Ascending aorta (tissue), 2 donors: ENCODE measurements at regions of chr7 and their contacts with region 1.

Region 1: GRCh38 chr7:155598810-155599210 is 45.7 kb upstream of the RBM33 start:
- DNase-seq: peak in 1 of 2 donors; percentile 79
- H3K4me3 ChIP-seq: no peak overlapping the region
- H3K27ac ChIP-seq: no peak overlapping the region
- H3K4me1 ChIP-seq: no peaks in the 10 kb centered on the region
- H3K27me3 ChIP-seq: no peaks in the 10 kb centered on the region
- CTCF ChIP-seq: peak; percentile 77 to 95 (median 87)

Region 2: DNA sequence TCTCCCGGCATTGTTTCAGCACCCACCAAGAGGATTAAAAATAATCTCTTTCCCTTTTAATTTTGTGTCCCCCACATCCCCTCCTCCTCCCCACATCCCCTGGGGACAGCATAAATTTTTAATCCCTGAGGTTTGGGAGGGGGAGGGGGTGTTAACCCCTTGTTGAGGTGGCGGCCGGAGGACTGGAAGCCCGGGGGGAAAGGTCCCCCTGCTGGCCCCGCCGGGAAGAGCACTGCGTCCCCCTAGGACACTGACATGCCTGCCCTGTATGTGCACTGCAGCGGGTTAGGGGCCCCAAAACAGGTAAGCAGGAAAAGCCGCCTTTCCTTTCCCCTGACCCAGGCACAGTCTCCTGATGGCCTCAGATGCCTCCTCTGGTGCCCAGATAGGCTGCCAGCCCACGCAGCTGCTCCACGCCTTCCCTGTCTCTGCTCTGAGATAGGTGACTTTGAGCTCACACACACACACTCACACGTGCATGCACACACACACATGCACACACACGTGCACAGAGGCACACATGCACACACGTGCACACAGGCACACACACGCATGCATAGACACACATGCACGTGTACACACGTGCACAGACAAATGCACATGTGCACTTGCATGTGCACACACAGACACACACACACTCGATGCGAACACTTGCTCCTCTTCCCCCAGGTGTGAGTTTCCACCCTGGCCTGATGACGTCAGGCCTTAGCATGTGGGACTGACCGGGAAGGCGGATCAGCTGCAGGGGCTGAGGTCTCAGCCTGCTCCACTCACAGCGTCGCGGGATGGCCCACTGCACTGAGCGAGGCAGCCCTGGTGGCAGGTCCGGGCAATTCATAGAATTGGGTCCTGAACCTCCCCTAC is 64.8 kb before region 1 on chr7:
- intact Hi-C with region 1: no loop called
- DNase-seq: no peak
- H3K4me3 ChIP-seq: no peak overlapping the region
- H3K27ac ChIP-seq: no peak overlapping the region
- H3K4me1 ChIP-seq: peaks cover 0 to 3% of the 10 kb centered on the region in 2 donors
- H3K27me3 ChIP-seq: peaks cover 10% of the 10 kb centered on the region
- CTCF ChIP-seq: peak in 1 of 3 experiments; percentile 14

Region 3: DNA sequence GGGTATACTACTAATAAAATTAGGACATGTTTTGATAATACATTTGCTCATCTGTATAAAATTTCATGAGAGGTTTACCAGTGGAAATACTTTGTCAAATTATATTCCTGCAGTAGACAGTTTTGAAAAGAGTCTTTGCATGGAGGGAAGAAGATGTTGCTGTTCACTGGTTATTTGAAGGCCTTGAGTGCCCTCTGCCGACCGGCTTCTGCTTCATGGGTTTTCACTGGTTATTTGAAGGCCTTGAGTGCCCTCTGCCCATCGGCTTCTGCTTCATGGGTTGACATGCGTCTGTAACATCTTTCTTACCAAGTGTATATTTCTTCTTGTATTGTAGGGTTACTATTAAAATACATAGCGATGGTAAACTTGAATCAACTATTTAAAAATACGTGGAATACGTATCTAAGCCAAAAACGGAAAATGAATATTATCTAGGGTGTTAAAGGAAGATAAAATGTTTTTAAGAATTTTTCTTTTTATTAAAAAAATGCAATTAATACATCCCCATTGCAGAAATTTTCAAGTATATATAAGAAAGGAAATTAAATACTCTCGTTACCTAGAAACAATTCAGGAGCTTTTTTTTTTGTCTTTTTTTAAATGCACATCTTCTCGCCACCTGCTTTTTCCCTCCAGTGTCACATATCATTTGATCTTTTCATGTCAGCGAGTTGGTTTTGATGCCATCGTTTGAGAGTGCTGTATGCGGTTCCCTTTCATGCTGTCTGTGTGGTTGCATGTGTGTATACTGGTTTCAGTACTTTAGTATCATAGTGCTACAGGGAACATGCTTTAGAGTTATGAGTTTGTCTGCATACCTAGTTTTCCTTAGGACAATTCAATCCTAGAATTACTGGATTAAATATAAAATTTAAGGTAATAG is 140.1 kb after region 1 on chr7:
- intact Hi-C with region 1: loop called (anchors 2 kb)
- DNase-seq: peak in 1 of 2 donors; percentile 79
- H3K4me3 ChIP-seq: no peak overlapping the region
- H3K27ac ChIP-seq: no peak overlapping the region
- H3K4me1 ChIP-seq: no peaks in the 10 kb centered on the region
- H3K27me3 ChIP-seq: no peaks in the 10 kb centered on the region
- CTCF ChIP-seq: peak; percentile 22 to 53 (median 44)

Region 4: DNA sequence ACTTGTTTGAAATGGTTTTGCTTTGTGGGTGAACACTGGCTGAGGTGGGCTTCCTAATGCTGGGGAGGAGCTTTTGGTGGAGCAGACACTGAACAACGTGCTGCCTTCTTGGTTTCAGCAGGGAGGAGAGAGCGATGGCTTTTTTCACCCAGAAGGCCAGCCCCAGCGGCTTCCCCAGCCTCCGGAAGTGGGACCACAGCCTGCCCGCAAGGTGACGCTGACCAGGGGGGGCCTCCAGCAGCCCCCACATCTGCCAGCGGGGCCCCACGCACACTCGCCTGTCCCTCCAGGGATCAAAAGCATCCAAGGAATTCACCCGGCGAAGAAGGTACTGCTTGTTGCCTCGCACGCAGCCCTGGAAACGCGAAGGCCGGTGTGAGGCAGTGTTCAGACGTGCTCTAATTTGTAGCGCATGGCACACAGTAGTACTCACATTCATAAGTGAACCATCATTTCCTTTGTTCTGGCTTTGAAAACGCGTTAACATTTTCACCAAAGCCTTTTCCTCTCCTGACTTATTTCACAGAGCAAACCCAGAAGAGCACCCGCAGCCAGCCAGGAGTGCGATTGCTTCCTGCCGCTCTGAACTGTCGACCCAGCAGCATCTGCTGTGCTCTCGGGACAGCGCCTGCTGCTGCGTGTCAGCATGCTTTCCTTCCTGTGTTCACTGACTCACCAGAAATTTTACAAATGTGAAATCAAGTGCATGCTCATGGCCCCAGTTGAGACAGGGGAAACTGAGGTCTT is 165.1 kb after region 1 on chr7:
- intact Hi-C with region 1: loop called (anchors 1 kb)
- DNase-seq: no peak
- H3K4me3 ChIP-seq: no peak overlapping the region
- H3K27ac ChIP-seq: no peak overlapping the region
- H3K4me1 ChIP-seq: no peaks in the 10 kb centered on the region
- H3K27me3 ChIP-seq: no peaks in the 10 kb centered on the region
- CTCF ChIP-seq: no peak

Region 5: DNA sequence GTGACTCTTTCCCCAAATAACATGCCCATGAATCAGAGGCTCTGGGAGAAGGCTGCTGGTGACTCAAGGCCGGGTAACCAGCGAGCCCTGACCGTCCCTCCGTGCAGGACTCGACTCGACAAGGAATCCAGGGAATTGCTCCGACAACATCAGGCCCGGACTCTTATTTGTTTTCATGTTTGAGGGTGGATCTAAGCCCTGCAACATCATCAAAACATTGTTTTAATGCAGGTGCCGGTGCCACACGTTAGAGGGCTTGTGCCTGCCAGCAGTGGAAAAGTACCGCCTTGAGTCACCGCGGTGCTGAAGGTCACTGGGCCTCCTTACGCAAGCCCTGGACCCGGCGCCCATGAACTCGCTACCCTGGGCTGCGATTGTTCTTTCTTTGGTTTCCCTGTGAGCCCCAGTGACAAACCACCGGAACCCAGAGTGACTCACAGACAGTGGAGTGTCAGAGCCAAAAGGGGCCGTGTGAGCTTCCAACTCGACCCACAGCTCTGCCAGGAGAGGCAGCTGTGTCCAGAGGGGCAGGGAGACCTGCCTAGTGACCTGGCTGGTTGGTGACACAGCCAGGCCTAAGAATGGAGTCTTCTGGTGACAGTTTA is 352.8 kb after region 1 on chr7:
- intact Hi-C with region 1: no loop called
- DNase-seq: peak in 1 of 2 donors; percentile 12
- H3K4me3 ChIP-seq: no peak overlapping the region
- H3K27ac ChIP-seq: no peak overlapping the region
- H3K4me1 ChIP-seq: no peaks in the 10 kb centered on the region
- H3K27me3 ChIP-seq: no peaks in the 10 kb centered on the region
- CTCF ChIP-seq: no peak